ENCODE measurements at regions of chr17 and their contacts with region 1.

Region 1: GRCh38 chr17:81967533-81968395 is 6.8 kb upstream of the NOTUM start:
- DNase-seq: peak; percentile 79
- ATAC-seq: peak; percentile 84 to 95 (median 89)
- H3K4me3 ChIP-seq: peak overlapping the region in 8 of 10 donors; percentile 3 to 29 (median 20)
- H3K27ac ChIP-seq: peak overlapping the region in 2 of 10 donors; percentile 36 to 46
- H3K4me1 ChIP-seq: peaks cover 3 to 28% (median 19%) of the 10 kb centered on the region in 9 donors
- H3K27me3 ChIP-seq: peaks cover 0 to 83% (median 38%) of the 10 kb centered on the region in 7 donors
- CTCF ChIP-seq: no peak

Region 2: DNA sequence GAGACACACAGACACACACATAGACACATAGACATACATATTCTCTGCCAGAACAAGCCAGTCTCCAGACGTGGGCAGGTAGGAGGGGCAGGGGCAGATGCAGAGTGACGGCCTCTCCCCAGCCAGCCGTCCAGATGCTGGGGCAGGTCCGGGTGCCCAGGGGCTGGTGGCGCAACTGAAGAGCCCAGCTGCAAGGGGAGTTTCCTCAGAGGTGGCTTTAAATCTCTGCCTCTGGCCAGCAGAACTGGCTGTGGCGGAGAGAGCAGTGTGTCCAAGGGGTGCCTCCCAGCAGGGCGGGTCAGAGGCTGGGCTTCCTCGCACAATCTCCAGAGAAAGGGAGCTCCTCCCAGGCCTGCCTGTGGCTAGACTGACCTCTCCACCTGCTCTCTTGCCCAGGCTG is 173.3 kb before region 1 on chr17:
- intact Hi-C with region 1: no loop called
- DNase-seq: no peak
- ATAC-seq: peak in 1 of 8 donors; percentile 47
- H3K4me3 ChIP-seq: no peak overlapping the region
- H3K27ac ChIP-seq: no peak overlapping the region
- H3K4me1 ChIP-seq: no peaks in the 10 kb centered on the region
- H3K27me3 ChIP-seq: peaks cover 0 to 21% (median 7%) of the 10 kb centered on the region in 7 donors
- CTCF ChIP-seq: no peak

Region 3: GRCh38 chr17:82006468-82007227 is 38.9 kb after region 1 on chr17:
- intact Hi-C with region 1: loop called in 1 of 10 experiments (anchors 5 kb)
- DNase-seq: peak in 1 of 2 donors; percentile 50
- ATAC-seq: peak in 7 of 8 donors; percentile 5 to 72 (median 33)
- H3K4me3 ChIP-seq: no peak overlapping the region
- H3K27ac ChIP-seq: peak overlapping the region in 3 of 10 donors; percentile 30 to 40 (median 39)
- H3K4me1 ChIP-seq: peaks cover 10 to 56% (median 33%) of the 10 kb centered on the region in 9 donors
- H3K27me3 ChIP-seq: no peaks in the 10 kb centered on the region
- CTCF ChIP-seq: no peak

Region 4: GRCh38 chr17:82020891-82021727 is 53.3 kb after region 1 on chr17:
- intact Hi-C with region 1: loop called in 2 of 10 experiments (anchors 2 to 5 kb)
- DNase-seq: peak; percentile 62 to 71
- ATAC-seq: peak in 5 of 8 donors; percentile 2 to 28 (median 15)
- H3K4me3 ChIP-seq: peak overlapping the region in 4 of 10 donors; percentile 75 to 100 (median 90)
- H3K27ac ChIP-seq: peak overlapping the region in 1 of 10 donors; percentile 87
- H3K4me1 ChIP-seq: peaks cover 19 to 34% (median 29%) of the 10 kb centered on the region in 9 donors
- H3K27me3 ChIP-seq: no peaks in the 10 kb centered on the region
- CTCF ChIP-seq: peak; percentile 47 to 75 (median 67)

Measured in heart right ventricle (tissue), 16 donors.